ENCODE measurements at regions of chr12 and their contacts with region 1.

Region 1: DNA sequence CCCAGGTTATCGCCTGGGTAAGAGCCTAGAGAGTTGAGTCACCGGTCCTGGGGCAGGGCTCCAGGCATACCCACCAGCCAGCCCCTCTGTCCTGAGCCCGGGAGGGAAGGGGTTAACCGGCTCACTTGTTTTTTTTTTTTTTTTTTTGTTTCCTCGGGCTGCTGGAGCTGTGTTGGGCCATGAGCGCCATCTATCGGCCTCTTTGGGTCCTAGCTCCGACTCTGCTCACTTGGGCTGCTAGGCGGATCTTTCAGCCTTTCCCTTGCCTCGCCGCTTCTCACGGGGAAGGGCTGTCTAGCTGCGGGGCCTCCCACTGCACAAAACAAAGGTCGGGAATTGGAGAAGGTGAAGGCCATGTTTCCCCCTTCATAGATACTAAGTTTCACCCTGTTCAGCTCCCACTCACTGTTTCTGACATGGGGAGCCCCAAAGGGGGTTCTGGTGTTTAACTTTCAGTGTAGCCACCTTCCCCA is 2.8 kb upstream of the SMUG1 start:
- DNase-seq: peak; percentile 66
- H3K4me3 Mint-ChIP-seq: no peak overlapping the region
- H3K27ac Mint-ChIP-seq: no peak overlapping the region
- H3K4me1 Mint-ChIP-seq: peaks cover 20% of the 10 kb centered on the region
- H3K27me3 Mint-ChIP-seq: peaks cover 43% of the 10 kb centered on the region

Region 2: DNA sequence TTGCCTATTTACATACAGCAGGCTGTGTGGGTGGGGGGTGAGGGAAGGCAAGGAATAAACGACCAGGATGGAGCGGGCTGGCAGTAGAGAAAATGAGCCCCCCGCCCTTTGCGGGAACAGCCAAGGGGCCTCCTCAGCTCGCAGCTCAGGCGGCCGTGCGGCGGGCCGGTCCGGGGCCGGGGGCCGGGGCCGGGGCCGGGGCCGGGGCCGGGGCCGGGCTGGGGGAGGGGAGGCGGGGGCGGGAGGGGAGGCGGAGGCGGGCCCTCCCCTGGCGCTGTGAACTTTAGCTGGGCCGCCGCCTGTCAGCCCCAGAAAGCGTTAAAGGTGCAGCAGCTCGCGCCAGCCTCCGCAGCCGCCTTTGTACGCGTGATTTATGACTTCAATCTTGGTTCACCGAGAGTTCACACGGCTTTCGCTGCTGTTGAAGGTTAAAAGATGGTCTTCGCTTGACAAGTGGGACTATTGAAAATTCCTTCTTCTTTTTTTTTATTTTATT is 109.1 kb before region 1 on chr12:
- intact Hi-C with region 1: no loop called
- DNase-seq: peak; percentile 18
- H3K4me3 Mint-ChIP-seq: peak overlapping the region; percentile 77
- H3K27ac Mint-ChIP-seq: peak overlapping the region; percentile 81
- H3K4me1 Mint-ChIP-seq: peaks cover 17% of the 10 kb centered on the region
- H3K27me3 Mint-ChIP-seq: peaks cover 24% of the 10 kb centered on the region

Region 3: GRCh38 chr12:54214553-54215406 is 23.2 kb after region 1 on chr12:
- intact Hi-C with region 1: loop called (anchors 1 kb)
- DNase-seq: peak; percentile 86
- H3K4me3 Mint-ChIP-seq: peak overlapping the region; percentile 74
- H3K27ac Mint-ChIP-seq: no peak overlapping the region
- H3K4me1 Mint-ChIP-seq: peaks cover 16% of the 10 kb centered on the region
- H3K27me3 Mint-ChIP-seq: peaks cover 21% of the 10 kb centered on the region

Region 4: DNA sequence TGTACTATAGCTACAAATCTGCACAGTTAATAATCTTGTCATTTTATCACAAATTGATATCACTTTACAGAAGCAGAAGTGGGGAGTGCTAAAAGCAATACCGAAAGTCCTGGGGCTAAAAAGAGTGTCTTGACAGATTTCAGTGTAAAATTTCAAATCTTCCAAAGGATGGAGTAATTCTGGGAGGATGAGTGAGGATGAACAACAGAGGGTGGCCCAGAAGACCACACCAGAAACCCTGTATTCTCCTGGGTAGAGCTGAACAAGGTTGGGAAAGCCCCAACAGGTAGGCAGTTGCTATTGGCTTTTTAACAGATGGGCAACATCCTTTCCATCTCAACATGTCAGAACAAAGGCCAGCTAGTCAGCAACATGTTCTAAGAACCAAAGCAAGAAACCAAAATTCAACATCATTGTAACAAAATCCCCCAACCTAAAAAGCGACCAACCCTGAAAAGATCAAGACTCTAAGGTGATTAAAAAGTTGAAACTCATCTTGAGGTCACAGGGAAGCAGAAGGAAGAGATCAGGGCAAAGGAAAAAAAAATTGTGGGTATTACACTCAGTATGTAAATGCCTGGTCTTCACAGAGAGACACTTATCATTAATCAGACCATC is 49.5 kb after region 1 on chr12:
- intact Hi-C with region 1: no loop called
- DNase-seq: no peak
- H3K4me3 Mint-ChIP-seq: no peak overlapping the region
- H3K27ac Mint-ChIP-seq: peak overlapping the region; percentile 80
- H3K4me1 Mint-ChIP-seq: peaks cover 11% of the 10 kb centered on the region
- H3K27me3 Mint-ChIP-seq: no peaks in the 10 kb centered on the region

Measured in activated T-helper 2 cell treated with anti-CD3 and anti-CD28 coated beads, Interferon-gamma antibody, Interleukin-2, Interleukin-4, amounts not matched to agents 10 μg/mL and 5 μg/mL and 100 μg/mL, durations not matched to agents 14 hours and 24 hours and 36 hours (primary cell).